Mammary epithelial cell (primary cell): ENCODE measurements at regions of chr22 and their contacts with region 1.

Region 1: GRCh38 chr22:35627264-35628041 is 10.3 kb upstream of the MB start:
- DNase-seq: peak; percentile 82
- H3K4me3 ChIP-seq: peak overlapping the region; percentile 30 to 52 (median 51)
- H3K27ac ChIP-seq: peak overlapping the region; percentile 75
- H3K4me1 ChIP-seq: peaks cover 26% of the 10 kb centered on the region
- H3K27me3 ChIP-seq: no peaks in the 10 kb centered on the region
- CTCF ChIP-seq: peak; percentile 35 to 80

Region 2: DNA sequence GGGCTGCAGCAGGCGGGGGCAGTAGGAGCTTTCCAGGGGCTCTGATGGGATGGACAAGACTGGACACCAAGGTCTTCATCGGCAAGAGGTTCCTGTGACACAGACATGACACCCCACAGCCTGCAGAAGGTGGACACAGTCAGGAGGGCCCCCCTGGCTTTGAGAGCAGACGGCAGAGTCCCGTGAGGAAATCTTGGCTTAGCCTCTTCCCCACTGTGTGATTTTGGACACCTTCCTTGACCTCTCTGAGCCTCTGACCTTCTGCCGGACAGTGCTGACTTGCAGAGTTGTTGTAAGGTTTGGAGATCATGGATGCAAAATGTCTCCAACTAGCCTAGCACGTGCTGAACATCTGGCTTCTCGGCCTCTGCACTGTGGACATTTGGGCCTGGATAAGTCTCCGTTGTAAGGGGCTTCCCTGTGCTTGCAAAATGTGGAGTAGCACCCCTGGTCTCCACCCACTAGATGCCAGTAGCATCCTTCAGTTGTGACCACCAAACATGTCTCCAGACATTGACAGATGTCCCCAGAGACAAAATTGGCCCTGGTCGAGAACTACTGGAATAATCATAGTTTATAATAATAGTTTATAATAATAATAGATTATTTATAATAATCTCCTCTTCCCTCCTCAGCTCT is 172.9 kb before region 1 on chr22:
- CTCF ChIA-PET with region 1: no interaction called
- dilution Hi-C with region 1: no loop called
- in situ Hi-C with region 1: no loop called
- intact Hi-C with region 1: loop called (anchors 1 kb)
- DNase-seq: no peak
- H3K4me3 ChIP-seq: no peak overlapping the region
- H3K27ac ChIP-seq: no peak overlapping the region
- H3K4me1 ChIP-seq: peaks cover 16% of the 10 kb centered on the region
- H3K27me3 ChIP-seq: no peaks in the 10 kb centered on the region
- CTCF ChIP-seq: peak in 1 of 2 donors; percentile 13

Region 3: GRCh38 chr22:35589071-35589952 is 38.1 kb before region 1 on chr22:
- CTCF ChIA-PET with region 1: no interaction called
- dilution Hi-C with region 1: no loop called
- in situ Hi-C with region 1: no loop called
- intact Hi-C with region 1: loop called (anchors 1 kb)
- DNase-seq: peak; percentile 96
- H3K4me3 ChIP-seq: no peak overlapping the region
- H3K27ac ChIP-seq: no peak overlapping the region
- H3K4me1 ChIP-seq: peaks cover 17% of the 10 kb centered on the region
- H3K27me3 ChIP-seq: no peaks in the 10 kb centered on the region
- CTCF ChIP-seq: peak in 1 of 2 donors; percentile 19

Region 4: DNA sequence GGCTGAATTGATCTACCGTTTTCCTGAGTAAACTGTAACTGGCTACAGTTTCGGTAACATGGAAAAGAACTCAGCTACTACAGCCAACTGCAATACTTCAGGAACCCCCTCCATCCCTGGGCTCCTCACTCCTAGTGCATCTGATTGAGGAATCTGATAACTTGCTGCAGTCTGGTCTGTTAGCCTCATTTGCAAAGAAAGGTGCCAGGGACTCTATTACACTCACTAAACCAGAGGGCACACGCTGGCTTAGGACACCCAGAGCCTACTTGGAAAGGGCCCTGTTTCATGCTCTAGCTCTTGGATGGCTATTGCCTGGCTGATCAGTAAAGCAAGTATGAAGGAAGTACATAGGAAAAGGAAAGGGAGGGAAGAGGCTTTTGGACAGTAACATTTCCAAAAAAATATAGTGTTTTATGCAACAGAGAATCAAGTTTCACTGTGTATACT is 112.5 kb after region 1 on chr22:
- CTCF ChIA-PET with region 1: no interaction called
- dilution Hi-C with region 1: no loop called
- in situ Hi-C with region 1: no loop called
- intact Hi-C with region 1: loop called (anchors 2 kb)
- DNase-seq: no peak
- H3K4me3 ChIP-seq: no peak overlapping the region
- H3K27ac ChIP-seq: no peak overlapping the region
- H3K4me1 ChIP-seq: peaks cover 14% of the 10 kb centered on the region
- H3K27me3 ChIP-seq: no peaks in the 10 kb centered on the region
- CTCF ChIP-seq: no peak

Region 5: GRCh38 chr22:36065775-36066559 is 438.5 kb after region 1 on chr22:
- CTCF ChIA-PET with region 1: interaction called, 5 read pairs
- dilution Hi-C with region 1: no loop called
- in situ Hi-C with region 1: no loop called
- intact Hi-C with region 1: loop called (anchors 1 kb)
- DNase-seq: peak; percentile 85
- H3K4me3 ChIP-seq: peak overlapping the region; percentile 46 to 55 (median 49)
- H3K27ac ChIP-seq: peak overlapping the region; percentile 58
- H3K4me1 ChIP-seq: peaks cover 13% of the 10 kb centered on the region
- H3K27me3 ChIP-seq: no peaks in the 10 kb centered on the region
- CTCF ChIP-seq: peak in 1 of 2 donors; percentile 93